Prostate gland (tissue), 2 donors: ENCODE measurements at regions of chr6 and their contacts with region 1.

Region 1: GRCh38 chr6:134161036-134161435 is 108.6 kb upstream of the SLC2A12 start:
- DNase-seq: no peak
- H3K4me3 ChIP-seq: no peak overlapping the region
- H3K27ac ChIP-seq: no peak overlapping the region
- H3K4me1 ChIP-seq: peaks cover under 1% of the 10 kb centered on the region
- H3K27me3 ChIP-seq: no peaks in the 10 kb centered on the region
- CTCF ChIP-seq: no peak
- POLR2A ChIP-seq: no peak

Region 2: GRCh38 chr6:134247231-134247833 is 86.3 kb after region 1 on chr6:
- intact Hi-C with region 1: no loop called
- DNase-seq: no peak
- H3K4me3 ChIP-seq: no peak overlapping the region
- H3K27ac ChIP-seq: no peak overlapping the region
- H3K4me1 ChIP-seq: no peaks in the 10 kb centered on the region
- H3K27me3 ChIP-seq: no peaks in the 10 kb centered on the region
- CTCF ChIP-seq: no peak
- POLR2A ChIP-seq: no peak

Region 3: DNA sequence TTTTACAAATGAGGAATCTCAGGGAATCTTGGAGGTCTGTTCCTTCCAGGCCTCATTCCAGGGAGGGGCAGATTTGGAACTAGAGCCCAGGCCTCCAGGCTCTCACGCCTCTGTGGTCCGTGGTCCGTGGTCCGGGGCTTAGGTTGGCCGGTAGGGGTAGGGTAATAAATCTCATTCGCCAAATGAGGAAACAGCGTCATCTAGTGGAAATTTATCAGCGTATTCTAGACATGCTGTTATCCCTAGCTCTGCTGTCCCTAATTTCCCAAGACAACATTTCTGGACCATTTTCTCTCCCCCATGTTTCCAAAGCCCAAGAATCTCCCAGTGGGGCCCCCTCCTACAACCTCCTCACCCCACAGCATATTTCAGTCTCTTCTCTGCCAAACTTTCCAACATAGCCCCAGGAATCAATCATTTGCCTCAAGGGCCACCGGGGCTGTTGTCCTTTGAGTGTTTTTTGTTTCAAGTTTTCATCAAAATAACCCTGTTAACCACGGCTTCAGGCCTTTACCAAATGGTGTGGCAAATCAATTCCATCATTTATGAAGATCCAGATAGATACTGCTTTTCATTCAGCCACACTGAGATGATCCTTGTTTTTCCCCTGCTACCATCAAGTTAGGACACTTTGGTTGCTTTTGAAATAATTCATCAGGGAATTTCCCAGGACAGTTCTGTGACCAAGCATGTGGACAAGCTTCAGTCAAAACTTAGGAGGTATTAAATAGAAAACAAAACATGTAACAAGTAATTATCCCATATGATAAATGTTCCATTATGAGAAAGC is 662.1 kb after region 1 on chr6:
- intact Hi-C with region 1: loop called (anchors 5 kb)
- DNase-seq: peak; percentile 63
- H3K4me3 ChIP-seq: no peak overlapping the region
- H3K27ac ChIP-seq: no peak overlapping the region
- H3K4me1 ChIP-seq: no peaks in the 10 kb centered on the region
- H3K27me3 ChIP-seq: no peaks in the 10 kb centered on the region
- CTCF ChIP-seq: peak; percentile 72 to 94 (median 88)
- POLR2A ChIP-seq: no peak

Region 4: GRCh38 chr6:134943522-134944111 is 782.6 kb after region 1 on chr6:
- intact Hi-C with region 1: loop called (anchors 5 kb)
- DNase-seq: no peak
- H3K4me3 ChIP-seq: no peak overlapping the region
- H3K27ac ChIP-seq: no peak overlapping the region
- H3K4me1 ChIP-seq: no peaks in the 10 kb centered on the region
- H3K27me3 ChIP-seq: no peaks in the 10 kb centered on the region
- CTCF ChIP-seq: no peak
- POLR2A ChIP-seq: no peak